Activated CD4-positive, alpha-beta T cell treated with anti-CD3 and anti-CD28 coated beads for 36 hours (primary cell): ENCODE measurements at regions of chr2 and their contacts with region 1.

Region 1: DNA sequence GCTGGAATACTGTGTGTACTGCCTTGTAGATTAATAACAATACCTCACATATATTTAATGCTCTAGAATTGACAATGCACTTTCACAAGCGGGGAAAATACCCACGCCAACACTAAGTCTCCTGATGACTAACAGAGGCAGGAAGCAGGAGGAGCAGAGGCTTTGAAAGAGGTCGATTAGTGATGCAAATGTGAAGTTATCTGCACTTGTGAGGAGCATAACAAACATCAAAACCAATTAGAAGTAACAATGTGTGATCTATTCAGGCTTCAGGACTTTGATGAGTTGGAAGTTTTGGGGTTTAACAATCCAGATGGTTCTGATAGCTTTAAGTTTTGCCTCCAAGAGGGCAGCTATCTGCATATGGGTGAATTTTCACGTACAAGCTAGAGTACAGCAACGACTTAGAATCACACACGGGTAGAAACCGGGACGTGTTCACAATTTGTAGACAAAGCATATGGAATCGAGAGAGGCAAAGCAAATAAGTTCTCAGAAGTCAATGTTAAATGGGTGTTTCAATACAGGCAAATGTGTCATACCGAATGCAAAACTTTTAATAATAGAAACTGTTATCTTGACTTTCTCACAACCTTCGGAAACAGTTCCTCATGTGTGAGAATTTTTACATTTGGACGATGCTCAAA is 114.5 kb downstream of the METTL8 start:
- DNase-seq: peak; percentile 78
- ATAC-seq: peak; percentile 80
- H3K4me3 Mint-ChIP-seq: peak overlapping the region; percentile 59
- H3K27ac Mint-ChIP-seq: peak overlapping the region; percentile 98
- H3K4me1 Mint-ChIP-seq: peaks cover 67% of the 10 kb centered on the region
- H3K27me3 Mint-ChIP-seq: no peaks in the 10 kb centered on the region

Region 2: DNA sequence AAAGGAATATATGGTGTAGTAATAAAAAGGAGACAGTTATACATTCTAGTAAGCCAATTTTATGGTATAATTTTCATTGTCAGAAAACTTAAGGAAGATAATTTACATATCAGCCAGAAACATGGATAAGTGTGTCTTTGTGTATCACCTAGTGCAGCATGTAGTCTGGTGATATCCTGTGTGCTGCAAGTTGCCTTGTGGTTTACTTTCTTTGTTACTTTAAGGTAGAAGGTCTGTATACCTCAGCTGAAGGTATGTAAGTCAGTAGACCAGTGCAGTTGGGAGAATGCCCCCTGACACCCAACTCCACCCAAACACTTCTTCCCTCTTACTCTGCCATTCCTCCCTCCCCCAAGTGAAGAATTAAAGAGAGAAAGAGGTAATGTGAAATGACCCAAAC is 379.2 kb before region 1 on chr2:
- CTCF ChIA-PET with region 1: no interaction called
- POLR2A ChIA-PET with region 1: no interaction called
- intact Hi-C with region 1: no loop called
- DNase-seq: no peak
- ATAC-seq: no peak
- H3K4me3 Mint-ChIP-seq: no peak overlapping the region
- H3K27ac Mint-ChIP-seq: peak overlapping the region; percentile 3
- H3K4me1 Mint-ChIP-seq: peaks cover 68% of the 10 kb centered on the region
- H3K27me3 Mint-ChIP-seq: no peaks in the 10 kb centered on the region

Region 3: GRCh38 chr2:170973492-170974303 is 345.6 kb before region 1 on chr2:
- CTCF ChIA-PET with region 1: interaction called, 3 read pairs
- POLR2A ChIA-PET with region 1: no interaction called
- intact Hi-C with region 1: loop called in 1 of 2 experiments (anchors 1 kb)
- DNase-seq: peak; percentile 93
- ATAC-seq: peak; percentile 93
- H3K4me3 Mint-ChIP-seq: peak overlapping the region; percentile 67
- H3K27ac Mint-ChIP-seq: peak overlapping the region; percentile 80
- H3K4me1 Mint-ChIP-seq: peaks cover 10% of the 10 kb centered on the region
- H3K27me3 Mint-ChIP-seq: no peaks in the 10 kb centered on the region

Region 4: GRCh38 chr2:171086352-171087290 is 232.7 kb before region 1 on chr2:
- CTCF ChIA-PET with region 1: interaction called, 5 read pairs
- POLR2A ChIA-PET with region 1: interaction called, 3 read pairs
- intact Hi-C with region 1: loop called in 1 of 2 experiments (anchors 2 kb)
- DNase-seq: peak; percentile 79
- ATAC-seq: peak; percentile 75
- H3K4me3 Mint-ChIP-seq: peak overlapping the region; percentile 69
- H3K27ac Mint-ChIP-seq: peak overlapping the region; percentile 73
- H3K4me1 Mint-ChIP-seq: peaks cover 71% of the 10 kb centered on the region
- H3K27me3 Mint-ChIP-seq: no peaks in the 10 kb centered on the region

Region 5: GRCh38 chr2:171173089-171173488 is 146.2 kb before region 1 on chr2:
- CTCF ChIA-PET with region 1: interaction called, 4 read pairs
- POLR2A ChIA-PET with region 1: interaction called, 4 read pairs
- intact Hi-C with region 1: loop called in 1 of 2 experiments (anchors 1 kb)
- DNase-seq: peak; percentile 57
- ATAC-seq: peak; percentile 97
- H3K4me3 Mint-ChIP-seq: no peak overlapping the region
- H3K27ac Mint-ChIP-seq: no peak overlapping the region
- H3K4me1 Mint-ChIP-seq: peaks cover 14% of the 10 kb centered on the region
- H3K27me3 Mint-ChIP-seq: no peaks in the 10 kb centered on the region

Region 6: GRCh38 chr2:171347591-171348032 is 28.3 kb after region 1 on chr2:
- CTCF ChIA-PET with region 1: interaction called, 4 read pairs
- POLR2A ChIA-PET with region 1: interaction called, 3 read pairs
- intact Hi-C with region 1: loop called (anchors 1 kb)
- DNase-seq: peak; percentile 55
- ATAC-seq: peak; percentile 85
- H3K4me3 Mint-ChIP-seq: no peak overlapping the region
- H3K27ac Mint-ChIP-seq: peak overlapping the region; percentile 82
- H3K4me1 Mint-ChIP-seq: peaks cover 34% of the 10 kb centered on the region
- H3K27me3 Mint-ChIP-seq: no peaks in the 10 kb centered on the region

Region 7: DNA sequence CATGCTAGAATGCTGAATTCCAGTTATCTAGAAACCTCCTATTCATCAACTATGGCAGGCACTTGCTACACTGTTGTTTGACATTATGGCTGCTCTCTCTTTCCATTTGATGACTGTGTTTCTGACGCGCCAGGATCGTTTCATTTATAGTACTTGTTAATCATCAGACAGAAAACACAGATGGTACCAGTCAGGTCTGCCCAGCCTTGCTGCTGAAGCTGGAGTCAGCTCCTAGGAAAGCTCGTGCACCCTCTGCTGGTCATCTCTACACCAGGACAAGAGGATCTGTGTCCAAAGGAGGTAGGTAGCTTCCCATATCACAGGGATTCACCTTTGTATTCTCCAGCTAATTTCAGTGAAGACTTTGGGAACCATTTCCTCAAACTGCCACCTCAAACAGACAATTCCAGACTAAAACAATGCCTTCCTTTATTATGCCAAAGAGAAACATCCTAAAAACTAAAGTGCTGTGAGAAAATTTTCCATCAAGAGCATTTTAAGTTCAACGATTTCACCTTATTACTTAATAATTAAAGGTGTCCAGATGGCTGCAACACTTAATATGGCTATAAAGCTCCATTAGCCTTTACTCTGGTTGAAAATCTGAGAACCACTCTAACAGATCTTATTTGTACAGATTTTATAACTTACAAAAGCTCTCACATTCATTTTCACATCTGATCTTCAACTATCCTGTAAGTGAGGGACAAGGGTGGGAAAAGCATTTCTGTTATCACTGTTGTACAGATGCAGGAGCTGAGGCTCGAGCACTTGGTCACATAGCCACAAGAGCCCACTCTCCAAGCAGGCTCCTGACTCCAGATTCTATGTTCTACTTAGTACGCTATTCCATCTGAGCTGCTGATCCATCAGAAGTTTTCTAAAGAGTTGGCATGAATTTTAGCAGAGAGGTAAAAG is 97.0 kb after region 1 on chr2:
- CTCF ChIA-PET with region 1: interaction called, 20 read pairs
- POLR2A ChIA-PET with region 1: no interaction called
- intact Hi-C with region 1: loop called (anchors 1 kb)
- DNase-seq: peak; percentile 93
- ATAC-seq: peak; percentile 98
- H3K4me3 Mint-ChIP-seq: peak overlapping the region; percentile 24
- H3K27ac Mint-ChIP-seq: peak overlapping the region; percentile 84
- H3K4me1 Mint-ChIP-seq: peaks cover 37% of the 10 kb centered on the region
- H3K27me3 Mint-ChIP-seq: no peaks in the 10 kb centered on the region